ENCODE measurements at regions of chr3 and their contacts with region 1.

Region 1: GRCh38 chr3:184513276-184514170 is 48.1 kb upstream of the EPHB3 start:
- DNase-seq: peak; percentile 95
- ATAC-seq: peak; percentile 95
- H3K4me3 Mint-ChIP-seq: peak overlapping the region; percentile 71
- H3K27ac Mint-ChIP-seq: no peak overlapping the region
- H3K4me1 Mint-ChIP-seq: peaks cover 30% of the 10 kb centered on the region
- H3K27me3 Mint-ChIP-seq: peaks cover 54% of the 10 kb centered on the region
- CTCF ChIP-seq: peak; percentile 79

Region 2: DNA sequence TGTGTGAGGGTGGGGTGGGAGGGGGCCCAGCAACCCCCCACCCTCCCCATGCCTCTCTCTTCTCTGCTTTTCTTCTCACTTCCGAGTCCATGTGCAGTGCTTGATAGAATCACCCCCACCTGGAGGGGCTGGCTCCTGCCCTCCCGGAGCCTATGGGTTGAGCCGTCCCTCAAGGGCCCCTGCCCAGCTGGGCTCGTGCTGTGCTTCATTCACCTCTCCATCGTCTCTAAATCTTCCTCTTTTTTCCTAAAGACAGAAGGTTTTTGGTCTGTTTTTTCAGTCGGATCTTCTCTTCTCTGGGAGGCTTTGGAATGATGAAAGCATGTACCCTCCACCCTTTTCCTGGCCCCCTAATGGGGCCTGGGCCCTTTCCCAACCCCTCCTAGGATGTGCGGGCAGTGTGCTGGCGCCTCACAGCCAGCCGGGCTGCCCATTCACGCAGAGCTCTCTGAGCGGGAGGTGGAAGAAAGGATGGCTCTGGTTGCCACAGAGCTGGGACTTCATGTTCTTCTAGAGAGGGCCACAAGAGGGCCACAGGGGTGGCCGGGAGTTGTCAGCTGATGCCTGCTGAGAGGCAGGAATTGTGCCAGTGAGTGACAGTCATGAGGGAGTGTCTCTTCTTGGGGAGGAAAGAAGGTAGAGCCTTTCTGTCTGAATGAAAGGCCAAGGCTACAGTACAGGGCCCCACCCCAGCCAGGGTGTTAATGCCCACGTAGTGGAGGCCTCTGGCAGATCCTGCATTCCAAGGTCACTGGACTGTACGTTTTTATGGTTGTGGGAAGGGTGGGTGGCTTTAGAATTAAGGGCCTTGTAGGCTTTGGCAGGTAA is 168.0 kb before region 1 on chr3:
- CTCF ChIA-PET with region 1: interaction called, 15 read pairs
- POLR2A ChIA-PET with region 1: interaction called, 3 read pairs
- DNase-seq: peak; percentile 73
- ATAC-seq: peak; percentile 92
- H3K4me3 Mint-ChIP-seq: no peak overlapping the region; the same call in 1 of the 2 replicates
- H3K27ac Mint-ChIP-seq: peak overlapping the region; percentile 78
- H3K4me1 Mint-ChIP-seq: peaks cover 16% of the 10 kb centered on the region
- H3K27me3 Mint-ChIP-seq: no peaks in the 10 kb centered on the region
- CTCF ChIP-seq: no peak

Region 3: GRCh38 chr3:184417619-184418327 is 95.8 kb before region 1 on chr3:
- CTCF ChIA-PET with region 1: interaction called, 22 read pairs
- POLR2A ChIA-PET with region 1: no interaction called
- DNase-seq: peak; percentile 79
- ATAC-seq: peak; percentile 95
- H3K4me3 Mint-ChIP-seq: no peak overlapping the region
- H3K27ac Mint-ChIP-seq: no peak overlapping the region
- H3K4me1 Mint-ChIP-seq: no peaks in the 10 kb centered on the region; the same call in 1 of the 2 replicates
- H3K27me3 Mint-ChIP-seq: no peaks in the 10 kb centered on the region
- CTCF ChIP-seq: peak; percentile 84

Region 4: GRCh38 chr3:184481984-184482671 is 31.4 kb before region 1 on chr3:
- CTCF ChIA-PET with region 1: interaction called, 19 read pairs
- POLR2A ChIA-PET with region 1: no interaction called
- DNase-seq: no peak
- ATAC-seq: no peak
- H3K4me3 Mint-ChIP-seq: no peak overlapping the region
- H3K27ac Mint-ChIP-seq: no peak overlapping the region
- H3K4me1 Mint-ChIP-seq: no peaks in the 10 kb centered on the region
- H3K27me3 Mint-ChIP-seq: peaks cover under 1% of the 10 kb centered on the region; the same call in 1 of the 2 replicates
- CTCF ChIP-seq: no peak

Region 5: DNA sequence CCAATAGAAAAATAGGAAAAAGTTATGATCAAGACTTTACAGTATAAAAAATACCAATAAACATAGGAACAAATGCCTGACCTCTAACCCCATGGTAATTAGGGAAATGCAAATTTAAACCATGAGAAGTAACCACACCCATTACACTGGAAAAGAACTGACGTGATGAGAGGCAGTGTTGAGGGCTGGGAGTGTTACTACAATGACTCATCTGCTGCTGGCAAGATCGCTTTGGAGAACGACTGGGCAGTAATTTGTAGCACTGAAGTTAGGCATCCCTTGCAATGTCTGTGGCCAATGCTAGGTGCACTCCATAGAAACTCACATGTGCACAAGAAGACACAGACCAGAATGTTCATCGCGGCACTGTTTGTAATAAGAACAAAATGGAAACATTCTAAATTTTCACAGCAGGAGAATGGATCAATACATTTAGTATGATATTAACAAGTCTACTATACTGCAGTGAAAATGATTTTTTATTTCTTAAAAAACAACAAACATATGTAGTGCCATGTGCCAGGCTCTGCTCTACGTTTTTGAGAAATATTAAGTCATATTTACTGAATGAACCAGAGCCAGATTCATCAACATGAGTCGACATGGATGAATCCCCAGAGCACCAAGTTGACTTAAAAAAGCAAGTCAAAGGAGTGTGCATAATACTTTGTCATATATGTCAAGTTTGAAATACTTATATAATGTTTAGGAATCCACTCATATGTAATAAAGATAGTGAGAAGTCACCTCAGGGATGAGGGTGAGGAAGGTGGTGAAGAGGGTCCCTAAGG is 10.5 kb after region 1 on chr3:
- CTCF ChIA-PET with region 1: interaction called, 55 read pairs
- POLR2A ChIA-PET with region 1: interaction called, 15 read pairs
- DNase-seq: no peak
- ATAC-seq: peak; percentile 15
- H3K4me3 Mint-ChIP-seq: peak overlapping the region; percentile 52
- H3K27ac Mint-ChIP-seq: peak overlapping the region; percentile 96
- H3K4me1 Mint-ChIP-seq: peaks cover 37% of the 10 kb centered on the region
- H3K27me3 Mint-ChIP-seq: no peaks in the 10 kb centered on the region
- CTCF ChIP-seq: no peak

Measured in WTC11 (cell line).